ENCODE measurements at regions of chr4 and their contacts with region 1.

Region 1: DNA sequence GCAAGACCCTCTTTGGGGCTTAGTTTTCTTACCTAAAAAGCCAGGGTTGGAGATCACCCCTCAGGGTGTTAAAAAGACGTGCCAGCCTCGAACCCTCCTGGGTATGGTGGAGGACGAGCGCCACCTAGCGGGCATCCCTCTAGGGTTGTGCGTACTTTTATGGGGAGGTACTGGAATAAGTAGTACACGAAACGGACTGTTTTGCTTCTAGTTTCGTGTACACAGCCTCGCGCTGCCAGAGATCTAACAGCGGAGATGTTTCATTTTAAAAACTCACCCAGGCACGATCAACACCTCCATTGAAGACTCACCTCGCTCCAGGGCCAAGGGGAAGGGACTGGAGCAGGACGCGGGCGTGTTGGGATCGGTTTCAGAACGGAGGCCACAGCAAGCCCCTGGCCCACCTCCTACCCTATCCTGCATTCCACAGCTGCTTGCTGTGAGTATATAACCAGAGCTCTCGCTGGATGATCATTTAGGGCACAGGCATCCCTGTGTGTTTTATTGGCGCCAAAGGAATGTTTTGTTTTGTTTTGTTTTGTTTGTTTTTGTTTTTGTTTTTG is 4.8 kb upstream of the NKX3-2 start:
- DNase-seq: peak; percentile 97
- H3K4me3 ChIP-seq: peak overlapping the region; percentile 27 to 50 (median 38)
- H3K27ac ChIP-seq: no peak overlapping the region
- H3K4me1 ChIP-seq: peaks cover 32 to 46% (median 40%) of the 10 kb centered on the region in 4 donors
- H3K27me3 ChIP-seq: peaks cover 1 to 73% (median 52%) of the 10 kb centered on the region in 4 donors
- CTCF ChIP-seq: peak; percentile 74 to 90 (median 84)
- EP300 ChIP-seq: no peak
- POLR2A ChIP-seq: no peak

Region 2: GRCh38 chr4:12729384-12729783 is 819.7 kb before region 1 on chr4:
- intact Hi-C with region 1: loop called (anchors 2 kb)
- DNase-seq: no peak
- H3K4me3 ChIP-seq: no peak overlapping the region
- H3K27ac ChIP-seq: no peak overlapping the region
- H3K4me1 ChIP-seq: no peaks in the 10 kb centered on the region
- H3K27me3 ChIP-seq: peaks cover 0 to 8% (median 0%) of the 10 kb centered on the region in 4 donors
- CTCF ChIP-seq: peak in 2 of 3 experiments; percentile 24 to 44
- EP300 ChIP-seq: no peak
- POLR2A ChIP-seq: no peak

Region 3: DNA sequence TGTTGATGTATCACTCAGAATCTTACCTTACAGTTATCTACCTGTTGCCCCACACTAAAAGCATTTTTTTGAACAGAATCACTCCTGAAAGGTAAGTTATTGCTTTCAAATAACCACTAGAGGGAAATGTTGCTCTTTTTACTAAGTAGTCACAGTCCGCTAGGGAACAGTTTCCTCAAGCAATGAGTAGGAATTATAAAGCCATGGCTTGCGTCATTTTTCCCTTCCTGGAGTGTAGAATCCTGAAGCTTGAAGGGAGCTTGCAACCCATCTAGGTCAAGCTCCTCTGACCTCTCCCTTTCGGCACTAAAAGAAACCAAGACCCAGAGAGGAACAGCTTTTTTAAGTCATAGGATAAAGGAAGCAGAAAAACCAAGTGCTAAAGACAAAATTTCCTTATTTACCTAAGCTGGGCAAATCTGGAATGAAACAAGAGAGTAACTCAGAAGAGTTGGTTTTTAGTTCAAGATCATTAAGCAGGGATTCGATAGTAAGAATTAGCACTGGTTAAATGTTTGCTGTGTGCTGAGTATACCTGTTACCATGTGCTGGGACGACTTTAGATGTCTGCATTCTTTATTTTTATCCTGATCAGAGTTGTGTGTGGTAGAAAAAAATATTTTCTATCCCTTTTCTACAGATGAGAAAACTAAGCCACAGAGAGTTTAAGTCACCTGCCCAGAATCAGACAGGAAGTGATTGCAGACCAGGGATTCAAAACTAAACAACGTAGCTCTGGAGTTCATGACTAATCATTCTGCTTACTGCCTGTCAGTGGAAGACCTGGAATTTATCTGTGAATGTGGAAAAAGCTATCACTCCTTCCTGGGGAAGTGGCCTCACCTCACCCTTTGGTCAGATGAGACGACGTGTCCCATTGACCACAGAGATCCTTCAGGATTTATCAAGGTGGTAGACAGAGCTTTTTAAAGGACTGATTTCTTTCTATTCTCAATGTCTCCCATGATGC is 696.4 kb before region 1 on chr4:
- intact Hi-C with region 1: loop called (anchors 2 kb)
- DNase-seq: no peak
- H3K4me3 ChIP-seq: no peak overlapping the region
- H3K27ac ChIP-seq: peak overlapping the region in 1 of 4 donors; percentile 9
- H3K4me1 ChIP-seq: peaks cover 0 to 6% (median 0%) of the 10 kb centered on the region in 4 donors
- H3K27me3 ChIP-seq: peaks cover 0 to 10% (median 0%) of the 10 kb centered on the region in 4 donors
- CTCF ChIP-seq: peak; percentile 55 to 59 (median 56)
- EP300 ChIP-seq: no peak
- POLR2A ChIP-seq: no peak

Region 4: GRCh38 chr4:14504162-14504561 is 955.1 kb after region 1 on chr4:
- intact Hi-C with region 1: no loop called
- DNase-seq: no peak
- H3K4me3 ChIP-seq: no peak overlapping the region
- H3K27ac ChIP-seq: no peak overlapping the region
- H3K4me1 ChIP-seq: no peaks in the 10 kb centered on the region
- H3K27me3 ChIP-seq: no peaks in the 10 kb centered on the region
- CTCF ChIP-seq: no peak
- EP300 ChIP-seq: no peak
- POLR2A ChIP-seq: no peak

Measured in esophagus muscularis mucosa (tissue), 4 donors.